ENCODE measurements at regions of chr4 and their contacts with region 1.

Region 1: GRCh38 chr4:106266201-106266600 is 49.8 kb downstream of the TBCK start:
- DNase-seq: peak; percentile 13 to 72
- H3K4me3 ChIP-seq: no peak overlapping the region
- H3K4me1 ChIP-seq: no peaks in the 10 kb centered on the region
- H3K27me3 ChIP-seq: no peaks in the 10 kb centered on the region

Region 2: DNA sequence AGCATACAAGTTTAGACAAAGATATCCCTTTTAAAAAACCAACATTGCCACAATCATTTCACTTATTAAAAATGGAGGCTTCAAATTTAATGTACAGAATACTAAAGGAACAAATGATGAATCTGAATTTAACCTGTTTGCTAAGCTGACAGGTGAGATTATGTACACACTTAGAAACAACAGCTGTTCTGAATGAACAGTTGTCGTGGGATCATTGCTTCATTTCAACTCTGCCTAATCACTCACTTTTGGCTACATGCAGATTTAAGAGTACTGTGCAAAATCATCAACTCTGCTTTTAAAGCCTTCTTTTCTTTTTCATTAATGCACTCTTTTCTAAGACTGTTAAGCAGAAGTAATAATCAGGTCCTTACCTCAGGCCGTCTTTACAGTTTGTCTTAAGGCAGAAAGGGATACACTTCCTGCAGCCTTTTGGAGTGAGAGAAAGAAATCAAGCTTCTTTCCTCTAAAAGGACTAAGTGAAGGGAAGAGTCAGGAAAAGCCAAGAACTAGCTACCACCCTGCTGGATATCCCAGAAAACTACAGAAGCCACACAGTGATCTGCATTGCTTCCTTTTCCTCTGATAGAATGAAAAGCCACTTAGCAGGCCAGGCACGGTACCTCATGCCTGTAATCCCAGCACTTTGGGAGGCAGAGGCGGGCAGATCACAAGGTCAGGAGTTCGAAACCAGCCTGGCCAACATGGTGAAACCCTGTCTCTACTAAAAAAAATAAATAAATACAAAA is 425.6 kb before region 1 on chr4:
- in situ Hi-C with region 1: no loop called
- DNase-seq: no peak
- H3K4me3 ChIP-seq: no peak overlapping the region
- H3K4me1 ChIP-seq: peaks cover 4% of the 10 kb centered on the region; the same call in 1 of the 2 replicates
- H3K27me3 ChIP-seq: no peaks in the 10 kb centered on the region

Region 3: DNA sequence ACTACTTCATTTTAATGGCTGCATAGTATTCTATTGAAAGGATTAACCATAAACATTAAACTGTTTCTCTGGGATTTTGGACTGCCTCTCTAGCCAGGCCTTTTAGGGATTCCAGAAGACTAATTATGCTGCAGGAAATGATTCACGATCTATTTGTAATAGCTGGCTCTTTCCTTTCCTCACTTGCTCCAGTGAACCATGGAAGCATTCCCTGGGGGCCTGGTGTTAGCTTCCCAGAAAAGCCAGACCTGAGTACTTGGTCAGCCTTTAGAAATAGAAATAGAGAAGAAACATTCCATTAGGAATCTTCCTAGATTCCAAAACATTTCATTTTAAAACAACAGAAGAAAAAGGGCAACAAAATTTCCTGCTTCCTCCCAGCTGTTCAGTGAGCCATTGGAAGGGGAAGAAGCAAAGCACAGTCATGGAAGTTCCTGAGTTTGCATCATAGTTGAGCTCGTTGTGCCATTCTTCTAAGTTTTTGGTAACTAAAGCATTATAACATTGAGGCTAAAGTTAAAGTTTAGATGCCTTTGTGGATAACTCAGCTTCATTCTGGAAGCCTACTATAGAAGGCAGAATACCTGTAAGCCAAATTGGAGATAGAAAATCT is 287.4 kb before region 1 on chr4:
- in situ Hi-C with region 1: no loop called
- DNase-seq: no peak
- H3K4me3 ChIP-seq: no peak overlapping the region
- H3K4me1 ChIP-seq: no peaks in the 10 kb centered on the region
- H3K27me3 ChIP-seq: no peaks in the 10 kb centered on the region

Region 4: DNA sequence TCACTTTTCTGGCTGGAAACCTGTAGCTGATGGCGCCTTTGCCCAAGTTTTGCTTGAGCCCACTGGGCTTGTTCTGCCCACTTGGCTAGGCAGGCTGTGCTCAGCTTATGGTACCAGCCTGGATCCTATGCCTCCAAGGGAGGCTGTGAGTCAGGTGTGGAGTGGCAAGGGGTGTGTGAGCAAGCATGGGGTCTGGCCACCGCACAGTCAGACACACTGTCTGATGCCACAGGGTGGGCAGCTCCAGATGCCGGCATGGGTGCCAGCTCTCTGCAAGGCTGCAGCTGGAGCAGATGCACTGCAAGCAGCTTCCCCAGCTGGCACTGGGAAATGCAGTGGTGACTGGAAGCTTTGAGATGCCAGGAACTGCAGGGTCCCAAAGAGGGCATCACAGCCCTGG is 118.7 kb after region 1 on chr4:
- in situ Hi-C with region 1: no loop called
- DNase-seq: no peak
- H3K4me3 ChIP-seq: no peak overlapping the region
- H3K4me1 ChIP-seq: no peaks in the 10 kb centered on the region
- H3K27me3 ChIP-seq: no peaks in the 10 kb centered on the region

Region 5: GRCh38 chr4:106495476-106495875 is 229.3 kb after region 1 on chr4:
- in situ Hi-C with region 1: loop called (anchors 10 kb)
- DNase-seq: peak in 1 of 2 experiments; percentile 35
- H3K4me3 ChIP-seq: no peak overlapping the region
- H3K4me1 ChIP-seq: no peaks in the 10 kb centered on the region
- H3K27me3 ChIP-seq: no peaks in the 10 kb centered on the region

Measured in HAP-1 (cell line).